Endothelial cell of umbilical vein (primary cell): ENCODE measurements at regions of chr10 and their contacts with region 1.

Region 1: GRCh38 chr10:119207367-119207668 is at the start of gene GRK5:
- DNase-seq: peak; percentile 95
- H3K4me3 ChIP-seq: peak within 1 kb of the TSS; percentile 68 to 90 (median 74)
- H3K27ac ChIP-seq: peak within 1 kb of the TSS; percentile 92
- H3K4me1 ChIP-seq: peaks cover 61% of the 10 kb centered on the region
- H3K27me3 ChIP-seq: no peaks in the 10 kb centered on the region
- CTCF ChIP-seq: no peak
- POLR2A ChIP-seq: no peak
- total RNA-seq, gene GRK5: 29.1 and 29.5 TPM in 2 replicates

Region 2: GRCh38 chr10:119235356-119235755 is 28.0 kb after region 1 on chr10:
- CTCF ChIA-PET with region 1: interaction called, 31 read pairs
- POLR2A ChIA-PET with region 1: interaction called, 3 read pairs
- dilution Hi-C with region 1: no loop called
- intact Hi-C with region 1: loop called (anchors 1 kb)
- DNase-seq: peak; percentile 62
- H3K4me3 ChIP-seq: no peak overlapping the region
- H3K27ac ChIP-seq: peak overlapping the region; percentile 56
- H3K4me1 ChIP-seq: peaks cover 49% of the 10 kb centered on the region
- H3K27me3 ChIP-seq: no peaks in the 10 kb centered on the region
- CTCF ChIP-seq: no peak
- POLR2A ChIP-seq: no peak

Region 3: DNA sequence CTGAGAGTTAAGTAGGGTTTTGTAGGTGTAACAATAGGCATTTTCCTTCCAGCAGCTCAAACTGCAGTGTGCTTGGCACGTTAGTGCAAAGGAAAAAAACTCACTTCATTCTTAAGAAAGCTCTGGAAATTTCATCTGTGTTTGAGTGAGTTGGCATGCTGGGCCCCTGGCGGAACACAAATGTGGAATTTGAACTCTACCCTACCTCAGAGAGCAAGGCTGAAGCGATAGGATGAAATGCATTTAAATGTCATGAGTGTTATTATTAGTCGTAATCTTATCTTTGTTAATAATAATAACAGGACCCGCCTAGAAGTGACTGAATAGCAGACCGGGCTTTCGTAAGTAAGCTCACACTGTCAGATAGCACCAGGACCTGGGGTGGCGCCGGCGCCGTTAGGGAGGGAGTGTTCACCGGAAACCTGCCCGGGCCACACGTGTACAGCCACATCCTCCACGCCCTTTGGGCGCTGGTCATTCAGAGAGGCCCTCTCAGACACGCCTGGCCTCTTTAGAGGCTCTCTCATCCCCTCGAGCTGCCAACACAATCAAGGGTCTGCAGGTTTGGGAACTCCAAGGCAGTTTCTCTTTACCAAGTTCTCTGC is 63.5 kb after region 1 on chr10:
- CTCF ChIA-PET with region 1: interaction called, 80 read pairs
- POLR2A ChIA-PET with region 1: interaction called, 5 read pairs
- dilution Hi-C with region 1: no loop called
- intact Hi-C with region 1: loop called (anchors 1 kb)
- DNase-seq: no peak
- H3K4me3 ChIP-seq: no peak overlapping the region
- H3K27ac ChIP-seq: peak overlapping the region; percentile 77
- H3K4me1 ChIP-seq: peaks cover 34% of the 10 kb centered on the region
- H3K27me3 ChIP-seq: no peaks in the 10 kb centered on the region
- CTCF ChIP-seq: no peak
- POLR2A ChIP-seq: peak; percentile 56

Region 4: DNA sequence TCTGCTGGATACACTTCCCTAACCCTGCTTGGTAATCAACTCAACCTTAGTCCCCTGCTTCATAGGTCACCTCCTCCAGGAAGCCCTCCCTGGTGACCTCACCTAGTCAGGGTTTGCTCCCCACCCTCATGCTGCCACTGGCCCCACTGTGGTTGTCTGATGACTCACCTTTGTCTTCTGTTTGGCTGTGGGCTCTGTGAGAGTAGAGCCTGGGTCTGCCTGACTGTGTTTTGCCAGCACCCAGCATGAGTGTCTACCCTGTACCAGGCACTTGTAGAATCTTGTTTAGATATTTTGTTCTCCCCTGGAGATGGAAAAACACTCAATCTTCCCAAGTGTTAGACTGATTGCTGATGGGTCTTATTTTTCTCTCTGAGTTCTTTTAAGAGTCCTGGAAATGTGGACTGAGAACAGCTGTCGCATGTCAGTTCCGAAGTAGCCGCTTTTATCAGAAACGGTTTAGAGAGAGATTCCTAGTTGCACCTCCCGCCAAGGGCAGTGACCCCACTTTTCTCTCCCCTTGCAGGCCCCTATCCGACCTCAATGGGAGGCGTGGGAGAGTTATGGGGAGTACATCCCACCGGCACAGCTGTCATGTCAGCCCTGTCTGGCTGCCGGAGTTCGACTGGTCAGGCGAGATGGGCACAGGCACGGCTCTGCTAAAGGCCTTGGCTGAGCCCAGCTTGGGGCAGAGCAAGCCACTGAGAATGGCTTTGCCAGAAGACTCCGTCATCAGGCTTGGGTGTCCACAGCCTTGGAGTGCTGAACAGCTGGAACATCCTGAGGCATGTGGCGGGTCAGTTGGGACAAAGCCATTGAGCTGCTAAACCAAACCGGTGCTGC is 134.4 kb after region 1 on chr10:
- CTCF ChIA-PET with region 1: interaction called, 20 read pairs
- POLR2A ChIA-PET with region 1: no interaction called
- dilution Hi-C with region 1: no loop called
- intact Hi-C with region 1: no loop called
- DNase-seq: peak; percentile 44
- H3K4me3 ChIP-seq: no peak overlapping the region
- H3K27ac ChIP-seq: no peak overlapping the region
- H3K4me1 ChIP-seq: peaks cover 21% of the 10 kb centered on the region
- H3K27me3 ChIP-seq: no peaks in the 10 kb centered on the region
- CTCF ChIP-seq: no peak
- POLR2A ChIP-seq: no peak

Region 5: DNA sequence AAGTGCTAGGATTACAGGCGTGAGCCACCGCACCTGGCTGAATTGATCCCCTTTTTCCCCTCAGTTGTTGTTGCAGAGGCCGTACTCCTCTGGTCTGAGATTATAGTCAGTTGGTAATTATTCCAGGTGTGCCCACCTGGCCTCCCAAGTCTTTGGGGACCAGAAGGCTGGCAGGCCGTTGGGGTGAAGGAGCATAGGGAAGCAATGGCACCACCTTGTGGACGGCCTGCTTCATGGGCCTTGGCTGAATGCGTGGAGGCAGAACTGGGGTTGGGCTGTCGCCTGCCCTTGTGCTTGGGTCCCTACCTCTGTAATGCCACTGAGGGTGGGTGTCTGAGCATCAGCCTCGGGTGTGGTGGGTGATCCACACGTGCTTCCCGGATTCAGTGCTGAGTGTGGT is 209.5 kb after region 1 on chr10:
- CTCF ChIA-PET with region 1: interaction called, 98 read pairs
- POLR2A ChIA-PET with region 1: no interaction called
- dilution Hi-C with region 1: no loop called
- intact Hi-C with region 1: loop called (anchors 1 kb)
- DNase-seq: peak; percentile 52
- H3K4me3 ChIP-seq: no peak overlapping the region
- H3K27ac ChIP-seq: no peak overlapping the region
- H3K4me1 ChIP-seq: peaks cover 4% of the 10 kb centered on the region
- H3K27me3 ChIP-seq: no peaks in the 10 kb centered on the region
- CTCF ChIP-seq: peak; percentile 68 to 88
- POLR2A ChIP-seq: no peak

Region 6: GRCh38 chr10:119542988-119543813 is 335.9 kb after region 1 on chr10:
- CTCF ChIA-PET with region 1: interaction called, 18 read pairs
- POLR2A ChIA-PET with region 1: no interaction called
- dilution Hi-C with region 1: no loop called
- intact Hi-C with region 1: no loop called
- DNase-seq: peak; percentile 48
- H3K4me3 ChIP-seq: peak overlapping the region; percentile 65 to 81 (median 67)
- H3K27ac ChIP-seq: no peak overlapping the region
- H3K4me1 ChIP-seq: peaks cover 6% of the 10 kb centered on the region
- H3K27me3 ChIP-seq: peaks cover 3 to 4% of the 10 kb centered on the region in 2 experiments
- CTCF ChIP-seq: peak; percentile 48 to 67
- POLR2A ChIP-seq: peak; percentile 13

Region 7: GRCh38 chr10:119872860-119873681 is 665.8 kb after region 1 on chr10:
- CTCF ChIA-PET with region 1: no interaction called
- POLR2A ChIA-PET with region 1: no interaction called
- dilution Hi-C with region 1: no loop called
- intact Hi-C with region 1: no loop called
- DNase-seq: peak; percentile 92
- H3K4me3 ChIP-seq: peak overlapping the region; percentile 20 to 96 (median 96)
- H3K27ac ChIP-seq: peak overlapping the region; percentile 81
- H3K4me1 ChIP-seq: peaks cover 18% of the 10 kb centered on the region
- H3K27me3 ChIP-seq: no peaks in the 10 kb centered on the region
- CTCF ChIP-seq: no peak
- POLR2A ChIP-seq: peak; percentile 79